CD4-positive, alpha-beta memory T cell (primary cell): ENCODE measurements at regions of chr4 and their contacts with region 1.

Region 1: DNA sequence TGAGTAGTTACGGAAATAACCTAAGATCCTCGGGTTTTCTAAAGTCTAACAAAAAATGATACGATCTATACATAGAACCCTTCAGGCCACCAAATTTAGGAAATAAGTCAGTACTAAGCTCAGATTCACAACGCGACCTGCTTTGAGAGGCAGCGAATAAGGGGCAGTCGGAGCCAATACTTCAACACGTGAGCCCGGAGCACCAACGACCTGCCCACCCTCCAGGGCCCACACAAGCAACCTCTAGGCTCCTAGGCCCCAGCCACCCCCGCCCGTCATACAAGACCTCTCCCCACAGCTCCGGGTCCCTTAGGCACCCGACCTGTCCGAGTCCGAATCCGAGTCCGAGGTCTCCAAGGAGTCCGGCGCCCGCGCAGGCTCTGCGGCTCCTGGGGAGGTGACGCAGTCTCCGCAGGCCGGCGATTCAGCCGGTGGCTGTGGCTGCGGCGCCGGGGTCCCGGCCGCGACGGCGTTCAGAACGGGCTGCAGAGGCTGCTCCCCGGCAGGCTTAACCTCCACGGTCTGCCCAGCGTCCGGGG is 580 bp downstream of the NAF1 start:
- DNase-seq: peak; percentile 66 to 76 (median 68)
- H3K4me3 ChIP-seq: peak overlapping the region; percentile 66 to 80
- H3K4me3 Mint-ChIP-seq: peak overlapping the region; percentile 83 to 97 (median 95)
- H3K27ac ChIP-seq: peak overlapping the region; percentile 90
- H3K27ac Mint-ChIP-seq: peak overlapping the region; percentile 83 to 99 (median 99)
- H3K4me1 ChIP-seq: peaks cover 37% of the 10 kb centered on the region
- H3K4me1 Mint-ChIP-seq: peaks cover 34 to 50% (median 41%) of the 10 kb centered on the region in 4 donors
- H3K27me3 ChIP-seq: no peaks in the 10 kb centered on the region
- H3K27me3 Mint-ChIP-seq: no peaks in the 10 kb centered on the region

Region 2: DNA sequence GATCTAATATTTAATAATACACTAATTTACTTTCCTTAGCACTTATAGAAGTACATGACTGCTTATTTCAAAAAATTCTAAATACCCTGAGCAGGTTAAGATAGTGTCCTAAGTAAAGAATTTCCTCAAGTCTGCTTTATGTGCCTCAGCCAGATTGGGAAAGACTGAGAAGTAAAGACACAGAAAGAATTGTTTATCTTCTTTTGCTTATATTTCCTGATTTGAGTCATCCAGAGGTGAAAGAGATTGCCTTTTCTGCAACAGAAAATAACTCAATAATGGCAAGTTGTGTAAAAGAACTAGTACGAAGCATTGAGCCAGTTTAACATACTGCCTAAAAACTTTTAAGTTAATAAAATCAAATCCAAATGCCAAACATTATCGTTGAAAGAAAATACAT is 44.4 kb before region 1 on chr4:
- CTCF ChIA-PET with region 1: no interaction called
- POLR2A ChIA-PET with region 1: no interaction called
- intact Hi-C with region 1: no loop called
- DNase-seq: no peak
- H3K4me3 ChIP-seq: no peak overlapping the region
- H3K4me3 Mint-ChIP-seq: no peak overlapping the region
- H3K27ac ChIP-seq: no peak overlapping the region
- H3K27ac Mint-ChIP-seq: no peak overlapping the region
- H3K4me1 ChIP-seq: no peaks in the 10 kb centered on the region
- H3K4me1 Mint-ChIP-seq: no peaks in the 10 kb centered on the region
- H3K27me3 ChIP-seq: no peaks in the 10 kb centered on the region
- H3K27me3 Mint-ChIP-seq: no peaks in the 10 kb centered on the region

Region 3: DNA sequence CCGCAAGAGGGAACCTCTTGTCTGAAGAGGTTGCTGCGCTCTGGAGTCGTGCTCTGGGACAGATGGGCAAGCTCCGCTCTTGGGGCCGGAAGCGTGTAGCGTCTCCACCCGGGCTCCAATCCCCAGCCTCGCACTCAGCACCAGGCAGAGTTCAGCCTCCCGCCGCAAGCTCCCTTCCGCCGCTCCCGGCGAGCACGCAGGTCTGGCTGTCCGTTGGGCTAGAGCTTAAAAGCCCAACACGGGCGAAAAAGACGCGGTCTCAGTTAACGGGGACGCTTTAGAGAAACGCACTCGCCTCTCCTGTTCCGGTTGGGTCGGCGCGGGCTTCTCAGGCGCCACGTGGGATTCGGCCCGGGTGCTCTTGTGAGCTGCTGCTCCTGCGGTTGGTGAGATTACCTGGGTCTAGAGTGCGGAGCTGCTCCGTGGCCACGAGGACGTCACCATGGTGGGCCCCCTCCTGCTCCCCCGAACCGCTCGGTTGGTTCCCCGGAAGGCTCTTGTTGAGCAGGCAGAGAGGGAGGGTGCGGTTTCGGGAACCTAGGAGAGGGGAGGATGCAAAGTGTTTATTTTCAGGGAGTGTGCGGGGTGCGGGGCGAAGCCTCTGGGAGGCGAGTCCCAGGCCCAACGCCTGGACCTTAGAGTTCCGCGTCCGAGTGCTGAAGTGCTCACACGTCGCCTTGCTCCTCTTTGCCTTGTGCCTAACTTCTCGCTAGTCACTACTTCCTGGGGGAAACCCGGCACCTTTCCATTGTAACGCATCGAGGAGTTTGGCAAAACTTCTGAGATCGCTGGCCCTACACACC is 328.5 kb after region 1 on chr4 and contains the start of gene TMA16:
- CTCF ChIA-PET with region 1: no interaction called
- POLR2A ChIA-PET with region 1: interaction called, 6 read pairs
- intact Hi-C with region 1: loop called (anchors 1 kb)
- DNase-seq: peak; percentile 79 to 85 (median 83)
- H3K4me3 ChIP-seq: peak within 1 kb of the TSS; percentile 77 to 98
- H3K4me3 Mint-ChIP-seq: peak within 1 kb of the TSS; percentile 91 to 98 (median 96)
- H3K27ac ChIP-seq: peak within 1 kb of the TSS; percentile 75
- H3K27ac Mint-ChIP-seq: peak within 1 kb of the TSS; percentile 90 to 99 (median 96)
- H3K4me1 ChIP-seq: peaks cover 33% of the 10 kb centered on the region
- H3K4me1 Mint-ChIP-seq: peaks cover 20 to 40% (median 33%) of the 10 kb centered on the region in 4 donors
- H3K27me3 ChIP-seq: no peaks in the 10 kb centered on the region
- H3K27me3 Mint-ChIP-seq: peaks cover 1 to 4% of the 10 kb centered on the region in 2 donors
- total RNA-seq, gene TMA16: 24.6 to 25.0 TPM

Region 4: DNA sequence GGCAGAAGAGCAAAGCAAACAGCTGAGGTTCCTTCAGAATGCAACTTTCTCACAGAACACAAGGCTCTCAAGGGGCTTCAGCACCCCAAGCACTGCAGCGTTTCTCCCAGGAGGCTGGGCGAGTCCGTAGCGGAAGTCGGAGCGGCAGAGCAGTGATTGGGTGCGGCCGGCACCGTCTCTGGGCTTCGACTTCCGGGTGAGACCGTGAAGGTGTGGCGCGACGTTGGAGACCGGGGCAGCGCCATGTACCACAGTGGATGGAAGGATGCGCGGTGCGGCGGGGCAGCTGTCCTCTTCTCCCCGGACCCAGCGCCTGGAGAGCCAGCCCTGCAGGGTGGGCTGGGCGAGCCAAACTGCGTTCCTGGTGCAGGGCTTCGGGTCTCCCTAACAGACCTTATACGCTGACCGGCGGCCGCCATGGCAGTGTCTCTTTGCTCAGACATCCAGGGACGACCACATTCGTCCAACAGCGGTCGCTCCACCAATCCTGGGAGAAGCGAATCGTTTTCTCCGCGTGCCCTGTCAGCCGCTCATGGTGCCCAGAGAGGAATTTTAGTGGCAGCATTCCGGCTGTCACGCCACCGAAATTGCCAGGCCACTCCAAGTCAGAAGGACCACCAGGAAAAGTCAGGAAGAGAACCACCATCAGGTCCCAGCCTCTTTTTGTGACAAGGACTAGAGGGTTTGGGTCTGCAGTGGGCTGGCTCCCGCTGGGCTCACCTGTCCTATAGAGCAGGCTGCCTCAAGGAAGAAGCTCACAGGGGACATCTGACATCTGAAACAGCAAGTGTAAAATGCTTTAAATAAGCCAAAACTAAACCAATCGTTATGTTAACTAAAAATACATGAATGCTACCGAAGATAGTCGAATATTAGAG is 1790.9 kb after region 1 on chr4:
- CTCF ChIA-PET with region 1: no interaction called
- POLR2A ChIA-PET with region 1: no interaction called
- intact Hi-C with region 1: loop called (anchors 10 kb)
- DNase-seq: peak; percentile 54 to 70 (median 66)
- H3K4me3 ChIP-seq: peak overlapping the region; percentile 61 to 72
- H3K4me3 Mint-ChIP-seq: peak overlapping the region; percentile 85 to 93 (median 89)
- H3K27ac ChIP-seq: no peak overlapping the region
- H3K27ac Mint-ChIP-seq: peak overlapping the region in 6 of 7 donors; percentile 6 to 78 (median 48)
- H3K4me1 ChIP-seq: peaks cover 11% of the 10 kb centered on the region
- H3K4me1 Mint-ChIP-seq: peaks cover 5 to 25% (median 15%) of the 10 kb centered on the region in 4 donors
- H3K27me3 ChIP-seq: no peaks in the 10 kb centered on the region
- H3K27me3 Mint-ChIP-seq: peaks cover 5 to 6% of the 10 kb centered on the region in 2 donors